Ascending aorta (tissue), 2 donors: ENCODE measurements at regions of chr21 and their contacts with region 1.

Region 1: DNA sequence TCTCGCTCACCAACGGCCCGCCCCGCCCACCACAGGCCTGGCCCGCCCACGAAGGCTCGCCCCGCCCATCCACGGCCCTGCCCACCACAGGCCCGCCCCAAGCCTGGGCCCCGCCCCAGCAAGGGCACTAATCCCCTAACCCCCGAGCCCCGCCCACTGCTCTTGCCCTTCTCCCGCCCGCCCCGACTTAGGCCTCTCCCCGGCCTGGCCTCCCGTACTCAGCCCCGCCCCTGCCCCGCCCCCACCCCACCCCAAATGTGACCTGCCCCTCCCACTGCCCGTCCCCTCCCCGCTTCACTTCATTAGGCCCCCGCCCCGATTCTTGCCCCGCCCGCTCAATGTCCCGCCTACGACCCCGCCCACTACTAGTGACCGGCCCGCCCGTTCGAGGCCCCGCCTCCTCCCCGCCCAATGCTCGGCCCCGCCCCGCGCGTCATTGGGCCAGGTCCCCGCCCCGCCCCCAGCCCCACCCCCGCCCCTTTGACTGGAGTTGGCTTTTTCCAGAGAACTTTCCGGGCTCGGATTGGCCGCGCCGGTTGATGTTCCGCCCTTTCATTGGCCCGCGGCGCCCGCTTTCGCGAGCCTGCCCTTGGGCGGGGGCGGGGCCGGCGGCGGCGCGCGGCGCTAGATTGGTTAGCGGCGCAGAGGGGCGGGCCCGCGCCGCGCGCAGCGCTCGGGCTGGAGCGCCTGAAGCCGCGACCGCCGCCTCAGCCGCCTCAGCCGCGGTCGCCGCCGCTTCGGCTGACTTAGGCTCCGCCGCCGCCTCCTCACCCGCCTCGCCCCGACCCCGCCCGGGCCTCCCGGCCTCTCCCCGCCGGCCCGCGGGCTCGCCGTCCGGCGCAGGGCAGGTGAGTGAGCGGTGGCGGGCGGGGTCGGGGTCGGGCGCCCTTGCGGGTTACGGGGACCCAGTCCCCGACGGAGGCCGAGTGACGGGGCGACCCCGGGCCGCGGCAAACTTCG is at the start of gene PCBP3:
- DNase-seq: peak; percentile 84 to 98
- H3K4me3 ChIP-seq: peak within 1 kb of the TSS; percentile 67
- H3K27ac ChIP-seq: peak within 1 kb of the TSS in 1 of 2 donors; percentile 49
- H3K4me1 ChIP-seq: peaks cover 2 to 3% of the 10 kb centered on the region in 2 donors
- H3K27me3 ChIP-seq: peaks cover 4% of the 10 kb centered on the region
- CTCF ChIP-seq: no peak
- total RNA-seq, gene PCBP3: not detected

Region 2: GRCh38 chr21:45698493-45699184 is 55.3 kb after region 1 on chr21:
- intact Hi-C with region 1: loop called (anchors 1 kb)
- DNase-seq: peak; percentile 33 to 84
- H3K4me3 ChIP-seq: no peak overlapping the region
- H3K27ac ChIP-seq: no peak overlapping the region
- H3K4me1 ChIP-seq: peaks cover 0 to 3% of the 10 kb centered on the region in 2 donors
- H3K27me3 ChIP-seq: no peaks in the 10 kb centered on the region
- CTCF ChIP-seq: no peak

Region 3: DNA sequence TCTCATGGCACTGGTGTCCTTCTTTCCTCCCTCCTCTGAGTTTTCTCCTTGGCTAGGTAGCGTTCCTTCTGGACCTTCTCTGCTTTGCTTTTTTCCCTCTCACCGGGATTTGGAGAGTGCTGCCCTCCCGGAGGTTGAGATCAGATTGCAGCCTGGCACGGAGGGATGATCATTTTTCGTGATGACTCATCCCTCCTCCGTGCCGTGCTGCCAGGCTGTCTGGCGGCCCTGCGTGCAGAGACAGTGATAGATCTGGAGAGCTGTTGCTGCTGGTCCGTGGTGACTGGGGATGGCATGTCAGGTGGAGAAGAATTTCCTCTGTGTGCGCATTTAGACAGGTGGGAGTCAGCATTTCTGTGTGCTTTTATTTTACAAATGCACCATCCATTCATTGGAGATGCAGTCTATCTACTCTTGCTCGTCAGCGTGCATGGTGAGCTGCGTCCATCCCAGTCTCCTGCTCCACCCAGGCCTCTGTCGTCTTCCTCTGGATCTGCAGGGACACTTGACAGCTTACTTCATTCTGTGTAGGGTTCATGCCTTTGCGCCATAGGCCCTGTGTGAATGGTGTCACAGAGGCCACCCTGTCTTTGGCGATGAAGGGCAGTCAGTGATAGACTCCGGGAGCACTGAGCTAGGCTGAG is 104.6 kb after region 1 on chr21:
- intact Hi-C with region 1: no loop called
- DNase-seq: no peak
- H3K4me3 ChIP-seq: no peak overlapping the region
- H3K27ac ChIP-seq: no peak overlapping the region
- H3K4me1 ChIP-seq: no peaks in the 10 kb centered on the region
- H3K27me3 ChIP-seq: no peaks in the 10 kb centered on the region
- CTCF ChIP-seq: no peak

Region 4: DNA sequence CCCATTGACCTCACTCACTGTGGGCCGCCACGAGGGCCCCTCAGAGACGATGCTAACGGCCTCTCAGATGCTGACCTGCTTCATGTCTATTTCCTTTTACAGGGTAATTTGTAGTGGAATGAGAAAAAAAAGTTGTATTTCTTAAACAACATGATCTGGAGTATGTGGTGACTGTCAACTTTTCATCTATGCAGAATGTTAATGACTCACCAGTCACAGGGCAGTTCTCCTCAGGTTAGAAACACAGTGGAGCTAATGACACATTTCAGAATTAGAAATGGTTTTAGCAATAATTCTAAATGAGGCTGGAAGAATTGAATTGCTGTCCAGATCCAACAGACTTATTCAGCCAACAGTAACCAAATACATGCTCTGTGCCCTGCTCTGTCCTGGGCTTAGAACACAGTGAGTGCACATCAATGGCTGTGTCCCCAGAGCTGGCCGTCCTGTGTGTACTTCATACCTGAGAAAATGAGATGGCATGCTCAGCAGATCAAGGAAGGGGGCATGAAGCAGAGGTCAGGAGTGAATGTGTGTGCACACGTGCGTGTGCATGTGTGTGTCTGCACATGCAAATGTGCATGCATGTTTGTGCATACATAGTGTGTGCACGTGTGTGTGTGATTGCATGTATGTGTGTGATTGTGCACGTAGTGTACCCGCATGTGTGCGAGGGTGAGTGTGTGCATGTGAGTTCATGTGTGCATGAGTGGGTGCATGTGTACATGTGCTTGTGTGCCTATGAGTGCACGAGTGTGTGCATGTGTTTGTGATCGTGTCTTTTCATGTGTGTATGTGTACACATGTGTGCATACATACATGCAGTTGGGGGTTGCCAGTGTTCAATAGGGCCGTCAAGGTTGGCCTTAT is 145.6 kb after region 1 on chr21:
- intact Hi-C with region 1: no loop called
- DNase-seq: no peak
- H3K4me3 ChIP-seq: no peak overlapping the region
- H3K27ac ChIP-seq: no peak overlapping the region
- H3K4me1 ChIP-seq: no peaks in the 10 kb centered on the region
- H3K27me3 ChIP-seq: no peaks in the 10 kb centered on the region
- CTCF ChIP-seq: no peak